ENCODE measurements at regions of chr11 and their contacts with region 1.

Region 1: GRCh38 chr11:11787305-11788062 is 54.3 kb upstream of the USP47 start:
- DNase-seq: peak; percentile 57 to 76
- ATAC-seq: peak; percentile 78 to 97 (median 89)
- H3K4me3 ChIP-seq: no peak overlapping the region
- H3K27ac ChIP-seq: no peak overlapping the region
- H3K4me1 ChIP-seq: peaks cover 0 to 8% (median 0%) of the 10 kb centered on the region in 9 donors
- H3K27me3 ChIP-seq: no peaks in the 10 kb centered on the region
- CTCF ChIP-seq: peak; percentile 77 to 97 (median 88)

Region 2: DNA sequence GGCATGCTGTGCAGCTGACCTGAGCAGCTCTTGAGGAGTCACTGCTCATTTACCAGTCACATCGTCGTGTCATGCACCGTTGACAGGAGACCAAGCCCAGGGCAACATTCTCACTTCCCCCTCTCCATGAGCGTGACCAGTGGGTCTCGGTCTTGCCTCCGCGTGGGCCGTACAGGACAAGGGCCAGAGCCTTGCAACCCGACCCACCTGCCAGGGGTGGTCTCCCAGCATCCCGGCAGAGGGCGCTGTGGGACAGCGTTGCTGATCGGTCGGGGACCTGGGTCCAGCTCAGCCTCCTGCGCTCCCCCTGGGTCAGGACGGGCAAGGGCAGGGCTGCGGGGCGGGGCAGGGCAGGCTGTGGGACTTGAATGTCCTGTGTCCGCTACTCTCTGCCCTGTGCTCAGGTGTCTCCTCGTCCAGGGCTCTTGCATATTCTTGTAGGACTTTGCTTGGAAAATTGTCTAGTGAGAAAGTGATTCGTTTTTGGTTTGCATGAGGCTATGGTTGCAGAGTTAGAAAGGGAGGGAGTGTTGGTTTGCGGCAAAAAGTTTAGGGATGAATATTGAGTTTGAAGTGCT is 995.0 kb before region 1 on chr11:
- intact Hi-C with region 1: loop called in 4 of 10 experiments (anchors 5 to 10 kb)
- DNase-seq: peak; percentile 88 to 92
- ATAC-seq: peak; percentile 93 to 96 (median 94)
- H3K4me3 ChIP-seq: peak overlapping the region in 5 of 10 donors; percentile 7 to 32 (median 28)
- H3K27ac ChIP-seq: no peak overlapping the region
- H3K4me1 ChIP-seq: peaks cover 0 to 25% (median 6%) of the 10 kb centered on the region in 9 donors
- H3K27me3 ChIP-seq: no peaks in the 10 kb centered on the region
- CTCF ChIP-seq: peak; percentile 84 to 97 (median 93)

Region 3: GRCh38 chr11:11028017-11028692 is 759.3 kb before region 1 on chr11:
- intact Hi-C with region 1: loop called in 6 of 10 experiments (anchors 1 to 2 kb)
- DNase-seq: peak; percentile 58 to 68
- ATAC-seq: peak; percentile 69 to 84 (median 78)
- H3K4me3 ChIP-seq: no peak overlapping the region
- H3K27ac ChIP-seq: no peak overlapping the region
- H3K4me1 ChIP-seq: no peaks in the 10 kb centered on the region
- H3K27me3 ChIP-seq: no peaks in the 10 kb centered on the region
- CTCF ChIP-seq: peak; percentile 40 to 82 (median 75)

Region 4: DNA sequence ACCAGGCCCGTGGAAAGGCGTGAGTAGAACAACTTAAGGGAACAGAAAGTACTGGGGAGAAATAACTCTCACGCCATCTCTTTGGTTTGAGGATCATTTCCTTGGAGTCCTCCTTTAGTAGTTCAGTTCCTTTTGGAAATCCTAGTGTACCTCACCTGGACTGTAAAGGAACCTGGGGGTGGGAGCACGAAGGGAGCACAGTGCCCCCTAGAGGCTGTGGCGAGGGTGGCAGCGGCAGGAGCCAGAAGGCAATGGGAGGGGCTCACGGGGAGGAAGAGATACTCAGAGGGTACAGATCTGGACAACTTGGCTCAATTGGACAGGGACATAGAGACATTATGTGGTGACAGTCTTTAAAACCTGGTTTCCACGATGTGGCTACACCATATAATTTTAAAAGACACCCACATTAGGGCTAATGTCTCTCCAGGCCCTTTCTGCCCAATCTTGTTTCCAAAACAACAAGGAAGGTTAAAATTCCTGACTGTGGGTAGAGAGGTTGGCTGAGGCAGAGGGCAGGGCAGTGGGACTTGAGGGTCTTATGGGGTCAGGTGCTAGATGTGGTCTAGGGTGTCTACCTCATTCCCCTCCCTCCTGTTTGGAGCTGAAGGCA is 521.4 kb before region 1 on chr11:
- intact Hi-C with region 1: loop called in 1 of 10 experiments (anchors 10 kb)
- DNase-seq: peak; percentile 27 to 62
- ATAC-seq: peak in 6 of 8 donors; percentile 43 to 81 (median 60)
- H3K4me3 ChIP-seq: no peak overlapping the region
- H3K27ac ChIP-seq: no peak overlapping the region
- H3K4me1 ChIP-seq: peaks cover 0 to 15% (median 8%) of the 10 kb centered on the region in 9 donors
- H3K27me3 ChIP-seq: no peaks in the 10 kb centered on the region
- CTCF ChIP-seq: peak; percentile 63 to 87 (median 85)

Region 5: GRCh38 chr11:11400635-11401232 is 386.8 kb before region 1 on chr11:
- intact Hi-C with region 1: loop called in 5 of 10 experiments (anchors 10 kb)
- DNase-seq: no peak
- ATAC-seq: no peak
- H3K4me3 ChIP-seq: no peak overlapping the region
- H3K27ac ChIP-seq: no peak overlapping the region
- H3K4me1 ChIP-seq: peaks cover 0 to 51% (median 13%) of the 10 kb centered on the region in 9 donors
- H3K27me3 ChIP-seq: no peaks in the 10 kb centered on the region
- CTCF ChIP-seq: peak in 6 of 9 donors; percentile 8 to 28 (median 26)

Region 6: GRCh38 chr11:11659567-11660362 is 127.7 kb before region 1 on chr11:
- intact Hi-C with region 1: loop called in 1 of 10 experiments (anchors 10 kb)
- DNase-seq: no peak
- ATAC-seq: no peak
- H3K4me3 ChIP-seq: no peak overlapping the region
- H3K27ac ChIP-seq: no peak overlapping the region
- H3K4me1 ChIP-seq: peaks cover 0 to 11% (median 0%) of the 10 kb centered on the region in 9 donors
- H3K27me3 ChIP-seq: peaks cover 0 to 10% (median 0%) of the 10 kb centered on the region in 7 donors
- CTCF ChIP-seq: peak in 5 of 9 donors; percentile 9 to 30 (median 20)

Measured in heart right ventricle (tissue), 16 donors.